ENCODE measurements at regions of chr11 and their contacts with region 1.

Region 1: DNA sequence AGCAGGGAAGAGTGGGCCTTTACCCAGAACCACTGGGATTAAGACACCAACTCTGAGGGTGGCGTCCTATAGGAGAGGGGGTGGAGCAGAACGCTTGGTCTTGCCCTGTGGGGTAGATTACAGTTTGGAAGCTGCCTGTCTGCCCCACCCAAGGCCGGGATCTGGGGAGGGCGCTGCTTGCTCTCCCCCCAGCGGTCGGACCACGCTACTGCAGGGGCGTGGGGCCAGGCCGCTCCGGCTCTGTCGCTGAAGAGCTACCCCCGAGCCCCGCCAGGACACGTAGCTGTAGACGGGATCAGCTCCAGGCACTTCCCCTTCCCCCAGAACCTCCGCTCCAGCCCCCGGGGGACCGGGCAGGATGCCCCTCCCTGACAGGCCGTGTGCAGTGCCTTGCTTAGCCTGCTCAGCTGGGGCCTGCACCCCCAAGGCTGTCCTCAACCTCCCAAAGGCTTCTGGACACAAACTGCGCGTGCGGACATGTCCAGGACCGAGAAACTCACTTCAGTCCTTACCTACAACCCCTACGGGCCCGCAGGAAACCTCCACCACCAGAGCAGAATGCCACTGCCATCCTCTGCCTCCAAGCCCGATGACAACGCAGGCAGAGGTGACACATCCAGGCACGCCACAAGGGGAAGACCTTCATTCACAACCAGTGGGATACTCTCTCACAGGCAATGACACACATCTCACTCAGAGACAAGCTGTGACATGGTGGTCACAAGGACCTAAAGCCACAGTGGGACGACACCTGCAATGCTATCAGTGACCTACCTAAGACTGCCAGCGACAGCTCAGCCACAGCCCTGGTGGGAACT is 3.6 kb downstream of the AHNAK start:
- DNase-seq: peak; percentile 72 to 82
- ATAC-seq: peak; percentile 11 to 46; a peak in 5 of 6 replicates
- H3K4me3 ChIP-seq: peak overlapping the region; percentile 96
- H3K27ac ChIP-seq: peak overlapping the region; percentile 97 to 98
- H3K4me1 ChIP-seq: peaks cover 75% of the 10 kb centered on the region
- CTCF ChIP-seq: peak; percentile 87
- EP300 ChIP-seq: no peak
- POLR2A ChIP-seq: no peak
- RAD21 ChIP-seq: peak; percentile 92 to 95

Region 2: DNA sequence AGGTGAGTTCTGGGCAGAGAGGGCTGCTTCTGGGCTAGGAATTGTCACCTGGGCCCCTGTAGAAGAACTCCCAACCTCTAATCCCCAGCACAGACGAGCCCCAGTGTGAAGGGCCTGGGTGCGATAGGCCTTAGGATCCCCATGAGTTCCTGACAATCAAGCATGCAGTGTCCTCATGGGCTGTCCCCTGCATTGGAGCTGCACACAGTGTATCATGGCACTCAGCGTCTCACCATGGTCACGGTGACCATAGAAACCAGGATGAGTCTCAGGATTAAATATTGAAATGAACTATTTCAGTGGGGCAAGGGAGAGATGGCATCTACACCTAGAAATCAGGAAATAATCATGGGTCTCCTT is 334.2 kb before region 1 on chr11:
- CTCF ChIA-PET with region 1: no interaction called
- POLR2A ChIA-PET with region 1: no interaction called
- DNase-seq: no peak
- ATAC-seq: peak in 1 of 2 experiments; percentile 35; a peak in 3 of 6 replicates
- H3K4me3 ChIP-seq: no peak overlapping the region
- H3K27ac ChIP-seq: no peak overlapping the region
- H3K4me1 ChIP-seq: no peaks in the 10 kb centered on the region
- CTCF ChIP-seq: no peak
- EP300 ChIP-seq: no peak
- POLR2A ChIP-seq: no peak
- RAD21 ChIP-seq: no peak

Region 3: DNA sequence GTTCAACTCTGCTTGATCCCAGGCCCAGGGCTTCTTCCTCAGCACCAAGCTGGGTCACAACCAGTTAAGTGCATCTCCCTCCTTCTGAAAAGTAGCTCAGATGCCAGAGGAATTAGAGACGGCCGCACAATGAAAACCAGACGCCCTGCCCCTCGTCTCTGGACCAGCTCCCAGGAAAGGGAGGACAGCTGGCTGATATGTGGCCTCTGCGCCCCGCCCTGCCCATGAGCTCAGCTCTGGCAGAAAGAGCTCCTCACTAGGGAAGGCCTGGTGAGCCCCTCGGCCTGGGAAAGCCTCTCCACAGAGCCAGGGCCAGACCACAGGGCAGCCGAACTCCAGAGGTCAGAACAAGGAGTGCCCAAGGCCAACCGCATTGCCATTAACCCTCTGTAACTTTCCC is 142.2 kb before region 1 on chr11:
- CTCF ChIA-PET with region 1: interaction called, 201 read pairs
- POLR2A ChIA-PET with region 1: no interaction called
- DNase-seq: no peak
- ATAC-seq: no peak
- H3K4me3 ChIP-seq: no peak overlapping the region
- H3K27ac ChIP-seq: peak overlapping the region in 1 of 2 experiments; percentile 48; a peak in 2 of 6 replicates
- H3K4me1 ChIP-seq: peaks cover 22% of the 10 kb centered on the region
- CTCF ChIP-seq: no peak
- EP300 ChIP-seq: no peak
- POLR2A ChIP-seq: no peak
- RAD21 ChIP-seq: no peak

Region 4: DNA sequence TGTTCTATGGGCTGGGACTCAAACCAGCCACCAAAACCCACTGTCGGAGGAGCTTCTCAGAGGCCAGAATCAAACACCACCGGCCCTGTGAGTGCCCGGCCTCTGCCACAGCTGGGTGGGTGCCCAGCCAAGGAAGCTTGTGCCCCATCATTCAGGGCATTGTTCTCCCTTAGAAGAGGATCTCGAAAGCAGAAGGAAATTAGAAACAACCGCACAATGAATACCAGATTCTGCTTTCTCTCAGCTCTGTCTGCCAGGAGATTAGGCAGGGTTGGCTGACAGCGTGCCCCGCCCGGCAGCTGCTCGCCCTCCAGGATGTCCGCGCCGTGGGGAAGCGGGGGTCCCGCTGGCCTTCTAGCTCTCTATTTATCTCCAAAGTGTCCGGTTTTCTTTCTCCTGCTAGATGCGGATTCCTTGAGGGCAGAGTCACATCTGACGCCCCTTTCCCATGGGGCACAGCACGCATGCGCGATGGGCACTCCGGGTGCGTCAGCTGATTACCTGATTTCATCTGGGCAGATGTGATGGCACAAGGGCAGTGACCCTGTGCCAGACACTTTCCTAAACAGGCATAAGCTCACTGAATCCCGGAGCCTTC is 98.6 kb before region 1 on chr11:
- CTCF ChIA-PET with region 1: interaction called, 17 read pairs
- POLR2A ChIA-PET with region 1: no interaction called
- DNase-seq: no peak
- ATAC-seq: no peak
- H3K4me3 ChIP-seq: no peak overlapping the region
- H3K27ac ChIP-seq: peak overlapping the region in 1 of 2 experiments; percentile 27; a peak in 1 of 6 replicates
- H3K4me1 ChIP-seq: peaks cover 23% of the 10 kb centered on the region
- CTCF ChIP-seq: no peak
- EP300 ChIP-seq: no peak
- POLR2A ChIP-seq: no peak
- RAD21 ChIP-seq: no peak

Region 5: GRCh38 chr11:62479631-62480201 is 63.2 kb before region 1 on chr11:
- CTCF ChIA-PET with region 1: interaction called, 14 read pairs
- POLR2A ChIA-PET with region 1: interaction called, 4 read pairs
- DNase-seq: no peak
- ATAC-seq: peak in 1 of 2 experiments; percentile 16; a peak in 1 of 6 replicates
- H3K4me3 ChIP-seq: no peak overlapping the region
- H3K27ac ChIP-seq: peak overlapping the region; percentile 0 to 80
- H3K4me1 ChIP-seq: peaks cover 20% of the 10 kb centered on the region
- CTCF ChIP-seq: no peak
- EP300 ChIP-seq: no peak
- POLR2A ChIP-seq: no peak
- RAD21 ChIP-seq: no peak

Region 6: GRCh38 chr11:62508268-62509058 is 34.5 kb before region 1 on chr11:
- CTCF ChIA-PET with region 1: interaction called, 82 read pairs
- POLR2A ChIA-PET with region 1: interaction called, 3 read pairs
- DNase-seq: peak; percentile 88 to 89
- ATAC-seq: peak; percentile 94 to 98
- H3K4me3 ChIP-seq: 0 out of 3 replicates have a peak overlapping the region, but pooled peaks have one; percentile 16
- H3K27ac ChIP-seq: peak overlapping the region; percentile 82 to 86
- H3K4me1 ChIP-seq: peaks cover 63% of the 10 kb centered on the region
- CTCF ChIP-seq: peak; percentile 50
- EP300 ChIP-seq: no peak
- POLR2A ChIP-seq: no peak
- RAD21 ChIP-seq: peak; percentile 22 to 47; a peak in 2 of 5 replicates

Region 7: GRCh38 chr11:62567018-62567633 is 24.2 kb after region 1 on chr11:
- CTCF ChIA-PET with region 1: interaction called, 21 read pairs
- POLR2A ChIA-PET with region 1: no interaction called
- DNase-seq: no peak
- ATAC-seq: no peak
- H3K4me3 ChIP-seq: no peak overlapping the region
- H3K27ac ChIP-seq: no peak overlapping the region
- H3K4me1 ChIP-seq: peaks cover 79% of the 10 kb centered on the region
- CTCF ChIP-seq: no peak
- EP300 ChIP-seq: no peak
- POLR2A ChIP-seq: no peak
- RAD21 ChIP-seq: no peak